ENCODE measurements at regions of chr18 and their contacts with region 1.

Region 1: DNA sequence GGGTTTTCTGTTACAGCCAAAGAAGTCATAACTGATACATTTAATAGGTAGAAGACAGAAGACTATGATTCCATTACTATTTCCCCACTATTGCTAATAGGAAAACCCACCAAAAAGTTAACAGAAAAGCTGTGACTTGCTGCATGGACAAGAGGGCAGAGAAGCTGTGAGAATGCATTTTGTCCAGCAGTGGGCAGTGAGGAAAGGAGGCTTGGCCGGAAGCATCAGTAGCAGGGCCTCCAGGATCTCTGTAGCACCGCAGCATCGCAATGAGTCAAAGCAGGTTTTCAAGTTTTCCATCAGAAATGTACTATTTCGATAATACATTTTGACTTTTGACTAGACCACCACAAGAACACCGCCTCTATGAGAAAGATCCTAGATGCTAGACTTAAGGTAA is 24.9 kb downstream of the MYO5B start:
- DNase-seq: no peak
- ATAC-seq: no peak
- H3K4me3 ChIP-seq: no peak overlapping the region
- H3K27ac ChIP-seq: no peak overlapping the region
- H3K4me1 ChIP-seq: no peaks in the 10 kb centered on the region
- H3K27me3 ChIP-seq: peaks cover 0 to 6% (median 3%) of the 10 kb centered on the region in 3 donors
- CTCF ChIP-seq: no peak

Region 2: GRCh38 chr18:50111265-50111792 is 58.7 kb before region 1 on chr18:
- intact Hi-C with region 1: loop called in 1 of 2 experiments (anchors 10 kb)
- DNase-seq: no peak
- ATAC-seq: no peak
- H3K4me3 ChIP-seq: no peak overlapping the region
- H3K27ac ChIP-seq: no peak overlapping the region
- H3K4me1 ChIP-seq: no peaks in the 10 kb centered on the region
- H3K27me3 ChIP-seq: no peaks in the 10 kb centered on the region
- CTCF ChIP-seq: no peak

Region 3: GRCh38 chr18:50356036-50356945 is 186.3 kb after region 1 on chr18:
- intact Hi-C with region 1: no loop called
- DNase-seq: no peak
- ATAC-seq: no peak
- H3K4me3 ChIP-seq: no peak overlapping the region
- H3K27ac ChIP-seq: no peak overlapping the region
- H3K4me1 ChIP-seq: no peaks in the 10 kb centered on the region
- H3K27me3 ChIP-seq: peaks cover 0 to 13% (median 9%) of the 10 kb centered on the region in 3 donors
- CTCF ChIP-seq: no peak